PC-3 (cell line): ENCODE measurements at regions of chr3 and their contacts with region 1.

Region 1: DNA sequence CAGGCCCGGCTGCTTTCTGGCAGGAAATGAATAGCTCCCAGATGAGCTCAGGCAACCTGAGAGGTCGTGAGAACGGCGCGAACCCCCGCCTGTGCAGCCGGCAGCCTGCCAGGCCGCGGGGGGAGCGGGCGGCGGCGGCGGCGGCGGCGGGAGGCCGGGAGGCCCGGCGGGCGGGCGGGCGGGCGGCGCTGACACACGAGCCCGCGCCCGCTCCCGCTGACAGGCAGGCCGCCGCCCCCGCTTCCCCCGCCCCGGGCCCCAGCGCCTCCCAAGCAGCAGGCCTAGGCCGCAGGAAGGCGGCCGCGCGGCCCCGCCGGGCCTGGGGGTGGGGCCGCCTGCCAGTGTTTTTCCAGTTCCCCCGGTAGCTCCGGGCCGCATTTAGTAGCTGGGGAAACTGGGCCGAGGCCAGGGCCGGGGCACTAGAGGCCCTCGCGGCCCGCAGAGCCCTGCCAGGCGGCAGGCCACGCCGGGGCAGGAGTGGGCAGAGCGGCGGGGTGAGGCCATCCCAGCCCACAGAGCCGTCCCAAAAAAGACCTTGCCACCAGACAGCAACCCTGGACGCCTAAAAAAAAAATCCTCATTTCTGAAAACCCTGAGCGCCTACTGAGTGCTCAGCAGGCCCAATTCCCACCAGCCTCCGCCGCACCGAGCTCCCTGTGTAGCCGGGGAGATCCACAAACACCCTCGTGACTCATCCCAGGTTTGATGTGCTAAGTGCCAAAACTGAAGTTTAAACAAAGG is 5.6 kb downstream of the HES1 start:
- DNase-seq: peak; percentile 94
- ATAC-seq: peak; percentile 44
- H3K4me3 ChIP-seq: peak overlapping the region; percentile 53
- H3K27ac ChIP-seq: peak overlapping the region; percentile 87
- H3K4me1 ChIP-seq: peaks cover 45% of the 10 kb centered on the region
- H3K27me3 ChIP-seq: no peaks in the 10 kb centered on the region
- CTCF ChIP-seq: no peak

Region 2: DNA sequence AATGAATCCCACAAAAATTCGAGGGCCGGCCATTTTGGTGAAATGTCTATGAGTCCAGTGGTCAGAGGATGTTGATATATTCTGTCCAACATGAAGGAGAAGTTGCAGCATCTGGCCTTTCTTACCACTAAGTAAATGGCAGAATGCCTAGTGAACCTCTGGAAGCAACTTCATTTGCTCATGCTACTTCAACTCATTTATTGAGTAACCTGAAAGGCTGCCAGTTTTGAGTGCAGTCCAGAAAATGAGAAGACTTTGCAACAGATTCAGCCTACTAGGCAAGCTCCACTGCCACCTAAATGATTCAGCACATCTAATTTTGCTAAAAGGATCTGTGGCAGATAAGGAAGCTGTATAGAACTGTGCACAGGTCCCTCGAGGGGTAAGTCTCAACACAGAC is 283.6 kb before region 1 on chr3:
- CTCF ChIA-PET with region 1: no interaction called
- POLR2A ChIA-PET with region 1: interaction called, 23 read pairs
- intact Hi-C with region 1: no loop called
- DNase-seq: peak; percentile 68
- ATAC-seq: no peak; the same call in 1 of the 2 replicates
- H3K4me3 ChIP-seq: no peak overlapping the region
- H3K27ac ChIP-seq: 0 out of 2 replicates have a peak overlapping the region, but pooled peaks have one; percentile 6
- H3K4me1 ChIP-seq: peaks cover 32% of the 10 kb centered on the region
- H3K27me3 ChIP-seq: no peaks in the 10 kb centered on the region
- CTCF ChIP-seq: no peak

Region 3: DNA sequence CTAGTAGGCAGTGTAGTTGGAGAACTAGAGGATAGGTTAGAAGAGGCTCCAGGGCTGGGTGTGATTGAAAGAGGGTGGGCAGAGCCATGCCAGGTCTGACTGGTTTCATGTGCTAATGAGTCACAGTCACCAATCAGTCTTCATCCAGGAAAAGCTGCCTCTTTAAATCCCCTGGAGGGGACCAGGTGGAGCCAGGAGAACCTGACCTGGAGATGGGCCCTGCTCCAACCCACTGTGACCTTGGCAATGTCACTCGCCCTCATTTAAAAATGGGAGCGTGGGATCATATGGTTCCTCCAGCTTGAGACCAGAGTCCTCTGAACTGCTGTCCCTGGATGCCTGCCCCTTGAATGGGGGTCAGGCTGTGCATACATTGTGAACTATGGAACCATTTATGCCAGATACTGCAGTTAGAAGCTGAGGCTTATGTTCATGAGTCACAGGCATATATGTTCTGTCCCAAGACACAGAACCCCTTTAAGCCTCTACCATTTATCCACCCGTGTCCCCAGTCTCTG is 17.4 kb after region 1 on chr3:
- CTCF ChIA-PET with region 1: interaction called, 4 read pairs
- POLR2A ChIA-PET with region 1: interaction called, 23 read pairs
- intact Hi-C with region 1: no loop called
- DNase-seq: peak; percentile 89
- ATAC-seq: peak; percentile 95
- H3K4me3 ChIP-seq: no peak overlapping the region
- H3K27ac ChIP-seq: peak overlapping the region; percentile 53
- H3K4me1 ChIP-seq: peaks cover 27% of the 10 kb centered on the region
- H3K27me3 ChIP-seq: no peaks in the 10 kb centered on the region
- CTCF ChIP-seq: no peak

Region 4: GRCh38 chr3:194323785-194324735 is 182.5 kb after region 1 on chr3:
- CTCF ChIA-PET with region 1: no interaction called
- POLR2A ChIA-PET with region 1: interaction called, 28 read pairs
- intact Hi-C with region 1: loop called (anchors 2 kb)
- DNase-seq: peak; percentile 96
- ATAC-seq: peak; percentile 57
- H3K4me3 ChIP-seq: peak overlapping the region; percentile 57
- H3K27ac ChIP-seq: peak overlapping the region; percentile 100
- H3K4me1 ChIP-seq: peaks cover 44% of the 10 kb centered on the region
- H3K27me3 ChIP-seq: no peaks in the 10 kb centered on the region
- CTCF ChIP-seq: no peak